ENCODE measurements at regions of chr10 and their contacts with region 1.

Region 1: DNA sequence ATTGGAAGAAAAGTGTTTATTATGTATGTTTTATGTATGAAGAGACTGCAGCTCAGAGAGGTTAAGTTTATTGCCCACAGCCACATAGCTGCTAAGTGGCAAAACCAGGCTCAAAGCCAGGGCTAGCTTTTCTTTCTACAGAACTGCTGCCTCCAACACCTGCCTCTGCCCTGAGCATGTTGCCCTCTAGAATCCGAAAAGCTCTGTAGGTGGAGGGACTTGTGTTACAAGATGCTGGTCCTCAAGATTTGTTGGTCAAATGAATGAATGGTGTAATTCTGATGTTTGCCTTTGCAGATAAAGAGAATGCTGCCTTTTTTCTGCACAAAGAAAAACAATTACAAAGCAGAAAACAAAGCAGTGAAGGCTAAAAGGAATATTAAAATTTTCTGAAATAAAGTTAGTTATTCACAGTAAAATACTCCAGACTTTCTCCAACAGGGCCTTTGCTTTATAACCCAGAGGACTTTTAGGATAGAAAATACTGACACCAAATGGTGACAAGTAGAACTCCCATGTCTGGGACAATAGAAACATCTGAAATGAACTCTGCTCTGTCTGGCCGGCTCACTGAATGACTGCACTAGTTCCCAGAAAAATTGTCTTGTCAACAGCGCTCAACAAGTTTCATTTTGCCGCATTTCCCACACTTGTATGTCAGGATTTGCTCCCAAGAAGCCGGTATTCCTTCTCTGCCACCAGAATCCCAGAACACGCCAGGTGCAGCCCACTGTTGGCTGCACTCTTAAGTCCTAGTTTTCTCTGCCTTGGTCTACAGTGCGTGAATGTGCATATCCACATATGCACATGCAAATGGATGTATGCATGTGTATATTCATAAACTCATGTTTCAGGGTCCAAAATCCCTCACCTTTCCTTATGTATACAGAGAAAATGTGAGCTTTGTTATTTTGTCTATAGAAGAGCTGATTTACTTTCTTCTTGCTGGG is 11.0 kb upstream of the DNTT start:
- DNase-seq: no peak
- ATAC-seq: peak; percentile 67
- H3K4me3 Mint-ChIP-seq: no peak overlapping the region
- H3K27ac Mint-ChIP-seq: peak overlapping the region; percentile 68
- H3K4me1 Mint-ChIP-seq: peaks cover 59% of the 10 kb centered on the region
- H3K27me3 Mint-ChIP-seq: no peaks in the 10 kb centered on the region
- CTCF ChIP-seq: peak; percentile 62

Region 2: GRCh38 chr10:95628786-95629185 is 664.5 kb before region 1 on chr10:
- CTCF ChIA-PET with region 1: no interaction called
- POLR2A ChIA-PET with region 1: no interaction called
- intact Hi-C with region 1: no loop called
- DNase-seq: no peak
- ATAC-seq: no peak
- H3K4me3 Mint-ChIP-seq: no peak overlapping the region
- H3K27ac Mint-ChIP-seq: no peak overlapping the region
- H3K4me1 Mint-ChIP-seq: no peaks in the 10 kb centered on the region
- H3K27me3 Mint-ChIP-seq: no peaks in the 10 kb centered on the region
- CTCF ChIP-seq: no peak

Region 3: GRCh38 chr10:96017191-96017687 is 276.0 kb before region 1 on chr10:
- CTCF ChIA-PET with region 1: interaction called, 12 read pairs
- POLR2A ChIA-PET with region 1: no interaction called
- intact Hi-C with region 1: loop called (anchors 1 kb)
- DNase-seq: no peak
- ATAC-seq: peak; percentile 74
- H3K4me3 Mint-ChIP-seq: no peak overlapping the region
- H3K27ac Mint-ChIP-seq: no peak overlapping the region
- H3K4me1 Mint-ChIP-seq: no peaks in the 10 kb centered on the region
- H3K27me3 Mint-ChIP-seq: no peaks in the 10 kb centered on the region
- CTCF ChIP-seq: peak; percentile 52

Region 4: GRCh38 chr10:96129387-96130325 is 163.6 kb before region 1 on chr10 and contains the start of gene ZNF518A:
- CTCF ChIA-PET with region 1: interaction called, 3 read pairs
- POLR2A ChIA-PET with region 1: interaction called, 6 read pairs
- intact Hi-C with region 1: loop called (anchors 5 kb)
- DNase-seq: peak; percentile 87
- ATAC-seq: peak; percentile 86
- H3K4me3 Mint-ChIP-seq: peak within 1 kb of the TSS; percentile 97
- H3K27ac Mint-ChIP-seq: peak within 1 kb of the TSS; percentile 100
- H3K4me1 Mint-ChIP-seq: peaks cover 21% of the 10 kb centered on the region
- H3K27me3 Mint-ChIP-seq: peaks cover 24% of the 10 kb centered on the region
- CTCF ChIP-seq: no peak
- total RNA-seq, gene ZNF518A: 23.8 and 28.7 TPM in 2 replicates

Region 5: DNA sequence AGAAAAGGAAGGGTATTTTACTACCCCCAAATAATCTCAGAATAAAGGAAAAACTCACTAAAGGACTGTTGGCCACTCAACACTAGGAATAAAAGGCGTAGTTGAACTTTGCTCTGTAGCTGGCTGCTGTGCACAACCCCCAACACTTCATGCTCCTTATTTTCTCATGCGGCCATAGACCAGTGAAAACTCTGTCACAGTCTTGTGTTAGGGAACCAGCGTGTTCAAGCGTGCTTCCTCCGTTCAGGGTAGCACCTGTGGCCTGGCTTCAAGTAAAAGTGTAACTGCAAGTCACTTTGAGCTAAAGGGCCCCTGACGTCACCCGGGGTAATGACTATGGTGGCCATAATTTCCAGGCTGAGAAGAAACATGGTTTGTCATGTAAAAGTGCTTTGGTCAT is 48.9 kb before region 1 on chr10:
- CTCF ChIA-PET with region 1: interaction called, 15 read pairs
- POLR2A ChIA-PET with region 1: interaction called, 20 read pairs
- intact Hi-C with region 1: loop called (anchors 1 kb)
- DNase-seq: peak; percentile 61
- ATAC-seq: peak; percentile 96
- H3K4me3 Mint-ChIP-seq: peak overlapping the region; percentile 67
- H3K27ac Mint-ChIP-seq: peak overlapping the region; percentile 91
- H3K4me1 Mint-ChIP-seq: peaks cover 80% of the 10 kb centered on the region
- H3K27me3 Mint-ChIP-seq: no peaks in the 10 kb centered on the region
- CTCF ChIP-seq: no peak

Region 6: GRCh38 chr10:96263669-96264068 is 29.6 kb before region 1 on chr10:
- CTCF ChIA-PET with region 1: interaction called, 21 read pairs
- POLR2A ChIA-PET with region 1: interaction called, 72 read pairs
- intact Hi-C with region 1: loop called (anchors 5 kb)
- DNase-seq: no peak
- ATAC-seq: no peak
- H3K4me3 Mint-ChIP-seq: peak overlapping the region; percentile 50
- H3K27ac Mint-ChIP-seq: peak overlapping the region; percentile 77
- H3K4me1 Mint-ChIP-seq: peaks cover 96% of the 10 kb centered on the region
- H3K27me3 Mint-ChIP-seq: no peaks in the 10 kb centered on the region
- CTCF ChIP-seq: no peak

Region 7: GRCh38 chr10:96325719-96326373 is 32.6 kb after region 1 on chr10:
- CTCF ChIA-PET with region 1: no interaction called
- POLR2A ChIA-PET with region 1: no interaction called
- intact Hi-C with region 1: no loop called
- DNase-seq: no peak
- ATAC-seq: no peak
- H3K4me3 Mint-ChIP-seq: no peak overlapping the region
- H3K27ac Mint-ChIP-seq: no peak overlapping the region
- H3K4me1 Mint-ChIP-seq: no peaks in the 10 kb centered on the region
- H3K27me3 Mint-ChIP-seq: peaks cover 14% of the 10 kb centered on the region
- CTCF ChIP-seq: no peak

Region 8: DNA sequence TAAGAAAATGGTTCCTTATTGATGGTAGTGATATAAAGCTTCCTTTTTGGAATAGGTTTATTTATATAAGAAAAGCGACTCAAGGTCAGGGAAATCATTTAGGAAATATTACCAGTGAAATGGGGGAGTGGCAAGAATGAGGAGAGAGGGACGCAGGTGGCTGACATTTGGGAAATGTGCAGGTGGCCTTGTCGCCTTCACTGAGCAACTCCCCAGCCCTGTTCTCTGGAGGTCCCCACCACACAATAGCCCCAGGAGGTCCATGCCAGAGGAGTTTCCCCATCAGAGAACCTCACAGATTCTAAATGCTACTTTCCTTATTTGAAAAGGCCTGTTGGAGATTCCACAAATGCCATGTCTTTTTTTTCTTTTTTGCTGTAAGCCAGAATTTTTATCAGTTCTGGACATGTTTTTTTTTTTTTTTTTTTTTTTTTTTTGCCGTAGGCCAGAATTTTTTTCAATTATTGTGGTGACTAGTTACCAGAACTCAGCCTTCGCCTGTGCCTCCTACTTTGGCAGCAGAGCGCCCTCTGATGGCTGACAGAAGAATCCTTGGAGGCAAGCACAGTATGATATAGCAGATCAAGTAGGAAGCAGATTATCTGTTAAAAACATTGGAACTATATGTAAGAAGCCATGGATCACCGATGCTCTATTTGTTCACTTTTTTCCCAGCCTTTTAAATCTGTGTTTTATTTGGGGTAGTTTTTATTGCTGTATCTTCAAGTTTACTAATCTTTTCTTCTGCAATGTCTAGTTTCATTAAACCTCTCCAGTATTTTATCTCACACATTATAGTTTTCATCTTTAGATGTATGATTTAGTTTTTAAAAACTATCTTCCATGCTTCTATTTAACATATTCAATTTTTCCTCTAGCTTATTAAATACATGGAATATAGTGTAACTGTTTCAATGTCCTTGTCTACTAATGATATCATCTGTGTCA is 47.0 kb after region 1 on chr10:
- CTCF ChIA-PET with region 1: interaction called, 3 read pairs
- POLR2A ChIA-PET with region 1: no interaction called
- intact Hi-C with region 1: loop called (anchors 1 kb)
- DNase-seq: peak; percentile 22
- ATAC-seq: peak; percentile 78
- H3K4me3 Mint-ChIP-seq: no peak overlapping the region
- H3K27ac Mint-ChIP-seq: no peak overlapping the region
- H3K4me1 Mint-ChIP-seq: peaks cover 6% of the 10 kb centered on the region
- H3K27me3 Mint-ChIP-seq: no peaks in the 10 kb centered on the region
- CTCF ChIP-seq: no peak

Measured in activated B cell treated with CpG ODN at 0.5 μM for 24 hours (primary cell).